Panc1 (cell line): ENCODE measurements at regions of chr9 and their contacts with region 1.

Region 1: GRCh38 chr9:129139993-129140396 is 28.8 kb downstream of the PTPA start:
- DNase-seq: no peak
- ATAC-seq: peak; percentile 69
- H3K4me3 ChIP-seq: peak overlapping the region; percentile 19 to 42
- H3K27ac ChIP-seq: peak overlapping the region; percentile 95
- H3K4me1 ChIP-seq: peaks cover 28% of the 10 kb centered on the region
- H3K27me3 ChIP-seq: no peaks in the 10 kb centered on the region
- CTCF ChIP-seq: no peak

Region 2: GRCh38 chr9:129610473-129611301 is 470.7 kb after region 1 on chr9:
- CTCF ChIA-PET with region 1: no interaction called
- POLR2A ChIA-PET with region 1: no interaction called
- in situ Hi-C with region 1: no loop called
- intact Hi-C with region 1: loop called (anchors 10 kb)
- DNase-seq: no peak
- ATAC-seq: peak; percentile 68
- H3K4me3 ChIP-seq: peak overlapping the region; percentile 51 to 61
- H3K27ac ChIP-seq: peak overlapping the region; percentile 72
- H3K4me1 ChIP-seq: peaks cover 20% of the 10 kb centered on the region
- H3K27me3 ChIP-seq: no peaks in the 10 kb centered on the region
- CTCF ChIP-seq: peak; percentile 83